HEK293T (cell line): ENCODE measurements at regions of chr4 and their contacts with region 1.

Region 1: DNA sequence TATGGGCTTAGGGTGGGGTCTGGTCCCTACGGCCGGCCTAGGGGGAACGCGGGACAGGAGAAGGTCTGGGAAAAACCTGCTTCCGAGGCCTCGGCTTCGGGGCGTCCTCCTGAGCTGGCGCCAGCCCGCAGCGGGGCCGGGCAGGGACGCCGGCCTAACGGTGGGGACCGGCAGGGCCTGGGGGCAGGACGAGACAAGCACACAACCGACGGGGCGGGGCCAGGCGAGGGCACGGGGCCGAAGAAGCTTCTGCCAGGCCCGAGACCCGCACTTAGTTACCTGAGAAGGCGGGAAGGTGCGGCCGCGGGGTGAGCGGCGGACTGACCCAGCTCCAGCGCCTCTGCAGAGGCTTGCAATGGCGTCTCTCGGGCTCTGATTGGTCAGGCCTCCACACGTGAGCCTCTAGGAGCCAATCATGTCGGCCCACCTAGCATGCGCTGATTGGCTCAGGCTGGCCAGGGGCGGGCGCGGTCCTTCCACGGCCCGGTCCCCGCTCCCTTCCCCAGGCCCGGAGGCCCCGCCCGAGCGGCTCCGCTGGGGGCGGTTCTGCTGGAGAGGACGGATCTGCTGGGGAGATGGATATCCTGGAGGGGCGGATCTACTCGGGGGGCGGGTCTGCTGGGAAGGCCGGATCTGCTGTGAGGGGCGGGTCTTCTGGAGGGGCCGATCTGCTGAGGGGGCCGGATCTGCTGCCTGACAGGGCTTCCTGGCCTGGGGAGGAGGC is 44.3 kb downstream of the CPLX1 start:
- DNase-seq: peak; percentile 99

Region 2: DNA sequence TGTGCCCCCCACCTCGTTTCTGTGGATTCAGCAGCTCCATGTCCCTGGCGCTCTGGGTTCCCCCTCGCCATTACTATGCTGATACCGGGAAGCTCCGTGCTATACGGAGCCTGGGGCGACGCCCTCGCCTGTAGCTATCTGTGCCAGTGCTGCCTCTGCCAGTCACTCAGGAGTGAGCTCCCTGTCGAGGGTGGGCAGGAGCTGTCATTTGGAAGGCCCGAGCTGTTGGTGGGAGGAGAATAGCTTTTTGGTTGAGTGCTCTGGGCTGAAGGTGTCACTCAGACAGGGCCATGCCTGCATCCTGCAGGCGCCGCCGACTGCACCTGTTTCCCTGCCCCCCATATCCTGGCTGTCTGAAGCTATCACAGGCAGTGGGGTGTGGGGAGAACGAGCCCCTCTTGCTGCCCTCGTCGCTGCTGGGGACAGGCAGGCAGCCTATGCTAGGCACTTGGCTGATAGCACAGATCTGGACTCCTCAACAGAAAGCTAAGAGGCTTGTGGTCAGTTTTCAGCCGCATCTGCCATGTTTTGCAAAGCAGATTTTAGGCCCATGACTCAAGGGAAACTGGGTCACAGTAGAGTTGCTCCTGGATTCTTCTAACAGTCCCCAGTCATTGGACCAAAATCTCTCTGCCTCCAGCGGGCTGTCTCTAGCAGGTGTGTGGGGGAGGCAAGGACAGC is 12.4 kb after region 1 on chr4:
- CTCF ChIA-PET with region 1: no interaction called
- POLR2A ChIA-PET with region 1: interaction called, 11 read pairs
- DNase-seq: no peak